ENCODE measurements at regions of chr5 and their contacts with region 1.

Region 1: GRCh38 chr5:130109152-130109551 is 204.9 kb downstream of the CHSY3 start:
- DNase-seq: peak; percentile 61
- ATAC-seq: 0 out of 2 replicates have a peak, but pooled peaks have one; percentile 23
- H3K4me3 ChIP-seq: no peak overlapping the region
- H3K27ac ChIP-seq: no peak overlapping the region
- H3K4me1 ChIP-seq: peaks cover 15% of the 10 kb centered on the region
- H3K27me3 ChIP-seq: no peaks in the 10 kb centered on the region
- CTCF ChIP-seq: peak; percentile 80

Region 2: DNA sequence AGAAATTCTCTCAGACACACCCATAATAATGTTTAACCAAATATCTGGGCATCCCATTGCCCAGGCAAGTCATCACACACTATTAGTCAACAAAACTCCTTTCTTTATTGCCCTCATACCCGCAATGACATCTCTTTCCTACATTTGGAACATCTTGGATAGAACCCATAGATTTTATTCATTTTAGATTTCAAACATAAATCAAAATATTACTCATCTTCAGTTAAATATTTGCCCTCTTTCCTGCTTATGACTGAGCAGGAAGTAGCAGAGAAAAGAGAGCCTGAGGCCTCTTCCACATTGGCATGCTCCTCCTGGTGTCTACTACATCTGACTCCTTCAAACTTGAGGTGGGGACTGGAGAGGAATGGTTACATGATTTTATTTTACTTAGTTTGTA is 387.1 kb after region 1 on chr5:
- CTCF ChIA-PET with region 1: no interaction called
- POLR2A ChIA-PET with region 1: no interaction called
- intact Hi-C with region 1: loop called (anchors 10 kb)
- DNase-seq: peak; percentile 92
- ATAC-seq: peak; percentile 100
- H3K4me3 ChIP-seq: no peak overlapping the region
- H3K27ac ChIP-seq: peak overlapping the region; percentile 100
- H3K4me1 ChIP-seq: peaks cover 17% of the 10 kb centered on the region
- H3K27me3 ChIP-seq: no peaks in the 10 kb centered on the region
- CTCF ChIP-seq: no peak

Region 3: GRCh38 chr5:130652176-130652575 is 543.0 kb after region 1 on chr5:
- CTCF ChIA-PET with region 1: no interaction called
- POLR2A ChIA-PET with region 1: no interaction called
- intact Hi-C with region 1: loop called (anchors 5 kb)
- DNase-seq: peak; percentile 94
- ATAC-seq: peak; percentile 97
- H3K4me3 ChIP-seq: no peak overlapping the region
- H3K27ac ChIP-seq: peak overlapping the region; percentile 79
- H3K4me1 ChIP-seq: peaks cover 20% of the 10 kb centered on the region
- H3K27me3 ChIP-seq: no peaks in the 10 kb centered on the region
- CTCF ChIP-seq: no peak

Region 4: GRCh38 chr5:130912088-130912487 is 802.9 kb after region 1 on chr5:
- CTCF ChIA-PET with region 1: no interaction called
- POLR2A ChIA-PET with region 1: no interaction called
- intact Hi-C with region 1: loop called (anchors 5 kb)
- DNase-seq: peak; percentile 42
- ATAC-seq: no peak; the same call in 1 of the 2 replicates
- H3K4me3 ChIP-seq: no peak overlapping the region
- H3K27ac ChIP-seq: no peak overlapping the region
- H3K4me1 ChIP-seq: no peaks in the 10 kb centered on the region
- H3K27me3 ChIP-seq: no peaks in the 10 kb centered on the region
- CTCF ChIP-seq: peak; percentile 65

Region 5: GRCh38 chr5:131109540-131110255 is 1000.5 kb after region 1 on chr5:
- CTCF ChIA-PET with region 1: no interaction called
- POLR2A ChIA-PET with region 1: no interaction called
- intact Hi-C with region 1: loop called (anchors 10 kb)
- DNase-seq: peak; percentile 64
- ATAC-seq: peak; percentile 81
- H3K4me3 ChIP-seq: no peak overlapping the region
- H3K27ac ChIP-seq: no peak overlapping the region
- H3K4me1 ChIP-seq: no peaks in the 10 kb centered on the region; the same call in 1 of the 2 replicates
- H3K27me3 ChIP-seq: no peaks in the 10 kb centered on the region
- CTCF ChIP-seq: peak; percentile 74

Measured in PC-3 (cell line).